Activated B cell treated with CpG ODN at 0.5 μM for 24 hours (primary cell): ENCODE measurements at regions of chr18 and their contacts with region 1.

Region 1: GRCh38 chr18:23452728-23453679 is at the start of gene RIOK3:
- DNase-seq: peak; percentile 91
- ATAC-seq: peak; percentile 97
- H3K4me3 Mint-ChIP-seq: peak within 1 kb of the TSS; percentile 99
- H3K27ac Mint-ChIP-seq: peak within 1 kb of the TSS; percentile 87
- H3K4me1 Mint-ChIP-seq: peaks cover 67% of the 10 kb centered on the region
- H3K27me3 Mint-ChIP-seq: no peaks in the 10 kb centered on the region
- CTCF ChIP-seq: no peak
- total RNA-seq, gene RIOK3: 90.4 and 92.4 TPM in 2 replicates

Region 2: DNA sequence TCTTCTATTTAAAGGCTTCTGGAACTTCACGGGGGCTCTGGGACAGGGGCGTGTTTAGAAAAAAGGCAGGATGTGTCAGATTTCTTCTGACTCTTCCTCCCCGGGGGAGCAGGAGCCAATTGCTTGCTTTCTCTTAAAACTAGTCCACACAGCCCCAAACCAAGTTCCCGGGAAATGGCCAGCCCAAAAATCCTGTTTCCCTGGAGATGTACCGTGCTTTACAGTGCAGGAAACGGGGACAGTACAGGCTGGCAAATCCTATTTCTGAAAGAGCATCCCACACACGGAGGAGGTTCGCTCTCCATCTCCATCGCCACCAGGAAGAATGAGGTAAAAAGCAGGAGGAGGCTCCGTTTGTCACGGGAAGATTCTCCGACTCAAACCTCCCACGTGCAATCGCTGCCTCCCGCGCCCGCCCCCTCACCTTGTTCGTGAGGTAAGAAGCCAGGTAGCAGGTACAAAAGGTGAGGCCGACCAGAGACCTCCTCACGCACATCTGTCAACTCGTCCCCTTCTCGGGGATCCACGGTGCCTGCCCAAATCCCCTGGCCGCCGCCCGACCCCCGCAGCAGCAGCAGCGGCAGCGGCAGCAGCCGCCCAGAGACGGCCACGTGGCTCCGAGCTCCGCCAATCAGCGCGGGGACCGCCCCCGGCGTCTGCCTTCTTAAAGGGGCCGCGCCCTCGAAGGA is 15.5 kb before region 1 on chr18:
- CTCF ChIA-PET with region 1: no interaction called
- POLR2A ChIA-PET with region 1: interaction called, 6 read pairs
- intact Hi-C with region 1: loop called (anchors 1 kb)
- DNase-seq: peak; percentile 76
- ATAC-seq: peak; percentile 99
- H3K4me3 Mint-ChIP-seq: peak overlapping the region; percentile 93
- H3K27ac Mint-ChIP-seq: peak overlapping the region; percentile 68
- H3K4me1 Mint-ChIP-seq: peaks cover 14% of the 10 kb centered on the region
- H3K27me3 Mint-ChIP-seq: no peaks in the 10 kb centered on the region
- CTCF ChIP-seq: no peak

Region 3: DNA sequence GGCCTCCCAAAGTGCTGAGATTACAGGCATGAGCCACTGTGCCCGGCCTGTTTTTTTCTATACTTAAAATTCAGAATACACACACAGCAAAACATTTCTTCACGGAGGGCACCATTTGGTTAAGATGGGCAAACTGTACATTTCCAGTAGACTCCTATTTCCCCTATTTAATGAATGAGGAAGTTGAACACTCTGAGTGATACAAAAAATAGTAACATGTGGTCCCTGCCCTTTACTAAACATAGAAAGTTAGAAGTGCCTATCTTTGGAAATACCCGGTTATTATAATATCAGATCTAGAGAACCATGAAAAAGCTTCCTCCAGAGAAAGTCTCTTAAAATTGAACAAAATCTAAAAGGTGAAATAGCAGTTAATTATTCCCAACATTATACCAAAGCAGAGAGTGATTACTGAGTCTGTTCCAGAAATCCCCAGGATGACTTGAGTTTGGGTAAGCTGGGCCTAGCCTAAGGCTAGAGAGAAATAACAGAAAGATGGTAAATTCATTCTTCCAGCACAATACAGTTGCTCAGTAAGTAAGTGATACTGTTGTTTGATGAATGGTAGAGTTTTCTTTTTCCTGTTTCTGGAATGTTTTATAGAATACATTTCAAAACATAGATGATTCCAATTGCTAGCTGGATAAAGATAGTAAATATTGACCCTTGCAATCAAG is 27.0 kb after region 1 on chr18:
- CTCF ChIA-PET with region 1: interaction called, 3 read pairs
- POLR2A ChIA-PET with region 1: interaction called, 22 read pairs
- intact Hi-C with region 1: loop called (anchors 1 kb)
- DNase-seq: no peak
- ATAC-seq: peak; percentile 91
- H3K4me3 Mint-ChIP-seq: peak overlapping the region; percentile 59
- H3K27ac Mint-ChIP-seq: peak overlapping the region; percentile 93
- H3K4me1 Mint-ChIP-seq: peaks cover 62% of the 10 kb centered on the region
- H3K27me3 Mint-ChIP-seq: no peaks in the 10 kb centered on the region
- CTCF ChIP-seq: no peak

Region 4: DNA sequence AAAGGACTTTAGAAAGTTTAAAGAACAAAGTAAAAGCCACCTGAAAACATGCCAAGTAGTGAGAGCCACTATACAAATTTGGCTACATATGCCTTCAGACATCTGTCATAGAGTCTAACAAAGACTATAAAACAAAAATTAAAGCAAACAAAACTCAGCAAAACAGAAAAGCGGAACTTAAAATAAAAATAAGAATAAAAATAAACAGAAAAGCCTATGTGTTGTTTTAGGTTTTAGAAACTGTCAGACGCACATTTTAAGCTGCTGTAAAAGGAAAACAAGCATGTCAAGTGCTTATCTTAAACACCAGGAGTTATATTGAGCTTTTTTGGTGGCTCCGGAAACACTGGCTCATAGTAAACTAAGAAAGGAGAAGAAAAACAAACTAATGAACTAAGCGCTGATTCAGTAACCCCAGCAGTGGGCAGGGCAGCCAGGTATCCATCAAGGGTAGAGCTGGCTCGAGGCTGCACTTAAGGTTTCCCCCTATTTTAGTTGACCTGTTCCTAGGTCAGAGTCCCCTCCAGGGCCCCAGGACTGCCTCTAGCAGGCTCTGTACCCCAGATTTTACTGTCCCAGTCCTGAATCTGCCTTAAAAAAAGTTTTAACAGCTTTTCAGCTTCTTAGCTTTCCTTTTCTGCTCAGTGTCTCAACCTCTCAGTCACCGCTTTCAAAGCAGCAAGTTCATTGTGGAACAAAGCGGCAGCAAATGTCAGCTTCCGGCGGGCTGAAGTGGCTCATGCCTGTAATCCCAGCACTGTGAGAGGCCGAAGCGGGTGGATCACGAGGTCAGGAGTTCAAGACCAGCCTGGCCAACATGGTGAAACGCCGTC is 35.0 kb after region 1 on chr18:
- CTCF ChIA-PET with region 1: interaction called, 5 read pairs
- POLR2A ChIA-PET with region 1: interaction called, 17 read pairs
- intact Hi-C with region 1: no loop called
- DNase-seq: peak; percentile 29
- ATAC-seq: peak; percentile 81
- H3K4me3 Mint-ChIP-seq: peak overlapping the region; percentile 82
- H3K27ac Mint-ChIP-seq: peak overlapping the region; percentile 97
- H3K4me1 Mint-ChIP-seq: peaks cover 61% of the 10 kb centered on the region
- H3K27me3 Mint-ChIP-seq: no peaks in the 10 kb centered on the region
- CTCF ChIP-seq: no peak

Region 5: DNA sequence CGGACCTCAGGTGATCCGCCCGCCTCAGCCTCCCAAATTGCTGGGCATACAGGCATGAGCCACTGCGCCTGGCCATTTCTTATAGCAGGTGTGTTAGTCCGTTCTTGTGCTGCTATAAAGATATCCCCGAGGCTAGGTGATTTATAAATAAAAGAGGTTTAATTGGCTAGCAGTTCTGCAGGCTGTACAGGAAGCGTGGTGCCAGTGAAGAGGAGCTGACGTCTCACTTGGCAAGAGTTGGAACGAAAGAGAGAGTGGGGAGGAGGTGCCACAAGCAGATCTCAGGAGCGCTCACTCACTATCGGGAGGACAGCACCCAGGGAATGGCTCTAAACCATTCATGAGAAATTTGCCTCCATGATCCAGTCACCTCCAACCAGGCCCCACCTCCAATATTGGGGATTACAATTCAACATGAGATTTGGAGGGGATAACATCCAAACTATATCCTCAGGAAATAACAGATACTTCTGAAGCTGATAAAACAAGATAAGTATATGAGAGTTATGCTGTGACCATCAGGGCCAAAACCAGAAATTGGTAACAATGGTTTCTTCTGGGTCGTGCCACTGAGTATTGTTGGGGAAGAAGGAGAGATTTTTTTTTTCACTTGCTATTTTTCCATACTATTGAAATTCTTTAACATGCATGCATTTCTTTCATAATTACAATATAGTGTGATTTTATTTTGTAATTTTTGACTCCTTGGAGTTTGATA is 42.9 kb after region 1 on chr18:
- CTCF ChIA-PET with region 1: interaction called, 4 read pairs
- POLR2A ChIA-PET with region 1: interaction called, 11 read pairs
- intact Hi-C with region 1: no loop called
- DNase-seq: no peak
- ATAC-seq: peak; percentile 40
- H3K4me3 Mint-ChIP-seq: peak overlapping the region; percentile 85
- H3K27ac Mint-ChIP-seq: peak overlapping the region; percentile 93
- H3K4me1 Mint-ChIP-seq: peaks cover 62% of the 10 kb centered on the region
- H3K27me3 Mint-ChIP-seq: no peaks in the 10 kb centered on the region
- CTCF ChIP-seq: no peak

Region 6: DNA sequence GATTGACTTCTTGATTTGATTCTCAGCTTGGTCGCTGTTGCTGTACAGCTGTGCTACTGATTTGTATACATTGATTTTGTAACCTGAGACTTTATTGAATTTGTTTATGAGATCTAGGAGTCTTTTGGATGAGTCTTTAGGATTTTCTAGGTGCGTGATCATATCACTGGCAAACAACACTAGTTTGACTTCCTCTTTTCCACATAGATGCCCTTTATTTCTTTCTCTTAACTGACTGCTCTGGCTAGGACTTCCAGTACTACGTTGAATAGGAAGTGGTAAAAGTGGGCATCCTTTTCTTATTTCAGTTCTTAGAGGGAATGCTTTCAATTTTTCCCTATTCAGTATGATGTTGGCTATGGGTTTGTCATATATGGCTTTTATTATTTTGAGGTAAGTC is 843.3 kb after region 1 on chr18:
- CTCF ChIA-PET with region 1: no interaction called
- POLR2A ChIA-PET with region 1: no interaction called
- intact Hi-C with region 1: no loop called
- DNase-seq: no peak
- ATAC-seq: no peak
- H3K4me3 Mint-ChIP-seq: no peak overlapping the region
- H3K27ac Mint-ChIP-seq: no peak overlapping the region
- H3K4me1 Mint-ChIP-seq: no peaks in the 10 kb centered on the region
- H3K27me3 Mint-ChIP-seq: peaks cover 7% of the 10 kb centered on the region
- CTCF ChIP-seq: no peak

Region 7: GRCh38 chr18:25210622-25211021 is 1757.6 kb after region 1 on chr18:
- CTCF ChIA-PET with region 1: no interaction called
- POLR2A ChIA-PET with region 1: no interaction called
- intact Hi-C with region 1: no loop called
- DNase-seq: no peak
- ATAC-seq: no peak
- H3K4me3 Mint-ChIP-seq: no peak overlapping the region
- H3K27ac Mint-ChIP-seq: no peak overlapping the region
- H3K4me1 Mint-ChIP-seq: no peaks in the 10 kb centered on the region
- H3K27me3 Mint-ChIP-seq: no peaks in the 10 kb centered on the region
- CTCF ChIP-seq: no peak